Gastrocnemius medialis (tissue), 4 donors: ENCODE measurements at regions of chr16 and their contacts with region 1.

Region 1: DNA sequence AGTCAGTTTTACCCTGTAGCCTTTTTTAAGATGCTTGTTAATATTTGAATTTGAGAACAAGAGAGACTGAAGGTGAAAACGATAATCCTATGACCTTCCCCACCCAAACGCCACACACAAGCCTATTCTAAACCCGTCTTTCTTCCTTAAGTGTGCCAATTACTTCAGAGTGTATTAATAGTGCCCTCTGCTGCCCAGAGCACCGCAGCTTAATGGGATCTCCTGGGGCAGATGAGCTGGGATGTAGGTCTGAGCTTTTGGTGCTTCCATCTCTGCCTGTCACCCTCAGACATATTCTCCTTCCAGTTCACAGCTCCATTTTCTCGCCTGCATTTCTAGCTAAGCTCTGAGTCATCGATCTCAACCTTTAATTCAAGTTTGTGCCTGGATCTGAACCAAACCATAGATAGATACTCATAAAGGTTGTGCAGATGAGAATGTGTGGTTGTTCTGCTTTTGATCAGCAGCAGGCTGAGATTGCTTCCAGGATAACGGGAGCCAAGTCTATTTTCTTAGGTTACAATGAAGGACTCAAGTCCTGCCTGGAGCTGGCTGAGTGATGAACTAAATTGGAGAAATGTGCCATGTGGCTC is 46.4 kb upstream of the CDH13 start:
- DNase-seq: peak in 1 of 2 donors; percentile 31
- ATAC-seq: peak in 1 of 2 donors; percentile 58
- H3K4me3 ChIP-seq: no peak overlapping the region
- H3K27ac ChIP-seq: peak overlapping the region in 1 of 4 donors; percentile 42
- H3K4me1 ChIP-seq: peaks cover 5 to 28% of the 10 kb centered on the region in 2 donors
- H3K27me3 ChIP-seq: no peaks in the 10 kb centered on the region
- CTCF ChIP-seq: peak in 3 of 5 experiments; percentile 30 to 53 (median 34)
- POLR2A ChIP-seq: no peak

Region 2: GRCh38 chr16:82257956-82258355 is 322.4 kb before region 1 on chr16:
- in situ Hi-C with region 1: loop called (anchors 5 to 25 kb)
- intact Hi-C with region 1: loop called (anchors 1 kb)
- DNase-seq: no peak
- ATAC-seq: no peak
- H3K4me3 ChIP-seq: no peak overlapping the region
- H3K27ac ChIP-seq: no peak overlapping the region
- H3K4me1 ChIP-seq: no peaks in the 10 kb centered on the region
- H3K27me3 ChIP-seq: no peaks in the 10 kb centered on the region
- CTCF ChIP-seq: no peak
- POLR2A ChIP-seq: no peak

Region 3: GRCh38 chr16:82368041-82368440 is 212.4 kb before region 1 on chr16:
- in situ Hi-C with region 1: no loop called
- intact Hi-C with region 1: loop called (anchors 1 kb)
- DNase-seq: no peak
- ATAC-seq: no peak
- H3K4me3 ChIP-seq: no peak overlapping the region
- H3K27ac ChIP-seq: no peak overlapping the region
- H3K4me1 ChIP-seq: no peaks in the 10 kb centered on the region
- H3K27me3 ChIP-seq: no peaks in the 10 kb centered on the region
- CTCF ChIP-seq: peak in 1 of 5 experiments; percentile 32
- POLR2A ChIP-seq: no peak

Region 4: GRCh38 chr16:82544378-82545160 is 35.8 kb before region 1 on chr16:
- in situ Hi-C with region 1: no loop called
- intact Hi-C with region 1: no loop called
- DNase-seq: no peak
- ATAC-seq: no peak
- H3K4me3 ChIP-seq: no peak overlapping the region
- H3K27ac ChIP-seq: no peak overlapping the region
- H3K4me1 ChIP-seq: peaks cover 0 to 7% of the 10 kb centered on the region in 2 donors
- H3K27me3 ChIP-seq: no peaks in the 10 kb centered on the region
- CTCF ChIP-seq: no peak
- POLR2A ChIP-seq: no peak

Region 5: GRCh38 chr16:82769845-82770244 is 189.5 kb after region 1 on chr16:
- in situ Hi-C with region 1: no loop called
- intact Hi-C with region 1: no loop called
- DNase-seq: peak; percentile 33 to 43
- ATAC-seq: peak; percentile 52 to 58
- H3K4me3 ChIP-seq: no peak overlapping the region
- H3K27ac ChIP-seq: no peak overlapping the region
- H3K4me1 ChIP-seq: peaks cover 44 to 50% of the 10 kb centered on the region in 2 donors
- H3K27me3 ChIP-seq: no peaks in the 10 kb centered on the region
- CTCF ChIP-seq: no peak
- POLR2A ChIP-seq: no peak

Region 6: GRCh38 chr16:82888591-82889001 is 308.2 kb after region 1 on chr16:
- in situ Hi-C with region 1: no loop called
- intact Hi-C with region 1: loop called (anchors 10 kb)
- DNase-seq: no peak
- ATAC-seq: no peak
- H3K4me3 ChIP-seq: no peak overlapping the region
- H3K27ac ChIP-seq: peak overlapping the region in 1 of 4 donors; percentile 9
- H3K4me1 ChIP-seq: peaks cover 41 to 45% of the 10 kb centered on the region in 2 donors
- H3K27me3 ChIP-seq: no peaks in the 10 kb centered on the region
- CTCF ChIP-seq: no peak
- POLR2A ChIP-seq: no peak